IMR-90 (cell line): ENCODE measurements at regions of chr19 and their contacts with region 1.

Region 1: DNA sequence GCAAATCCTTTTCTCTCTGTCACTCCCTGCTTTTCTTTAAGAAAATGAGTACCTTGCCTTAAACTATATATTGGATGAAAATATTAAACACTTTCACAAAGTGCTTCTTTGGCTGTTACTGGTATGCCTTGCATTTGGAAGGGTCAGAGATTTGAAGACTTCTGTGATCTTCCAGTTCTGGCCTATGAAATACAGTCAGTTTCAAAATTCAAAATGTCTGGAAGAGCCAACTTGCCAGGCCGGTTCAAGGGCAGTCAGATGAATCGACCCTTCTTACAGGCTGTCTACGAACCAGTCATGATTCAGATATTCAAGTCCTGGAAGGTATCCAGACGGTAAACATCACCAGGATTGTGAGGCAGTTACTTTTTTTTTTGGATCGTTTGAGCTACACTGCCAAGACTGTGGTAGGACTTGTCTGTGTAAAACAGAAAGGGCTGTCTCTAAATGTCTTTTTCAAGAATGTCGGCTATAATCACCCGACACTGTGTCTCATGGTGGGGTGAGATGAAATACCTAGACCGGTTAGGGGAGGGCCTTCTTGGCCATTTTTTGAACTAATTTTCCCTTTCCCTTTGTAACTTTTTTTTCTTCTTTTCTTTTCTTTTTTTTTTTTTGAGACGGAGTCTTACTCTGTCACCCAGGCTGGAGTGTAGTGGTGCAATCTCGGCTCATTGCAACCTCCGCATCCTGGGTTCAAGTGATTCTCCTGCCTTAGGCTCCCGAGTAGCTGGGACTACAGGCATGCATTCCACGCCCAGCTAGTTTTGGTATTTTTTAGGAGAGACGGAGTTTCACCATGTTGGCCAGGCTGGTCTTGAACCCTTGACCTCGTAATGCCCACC is 11.2 kb downstream of the ACTN4 start:
- DNase-seq: peak; percentile 100
- ATAC-seq: peak; percentile 67
- H3K4me3 ChIP-seq: peak overlapping the region; percentile 17; the same call in 1 of the 2 replicates
- H3K27ac ChIP-seq: peak overlapping the region; percentile 97
- H3K4me1 ChIP-seq: peaks cover 44% of the 10 kb centered on the region
- H3K27me3 ChIP-seq: no peaks in the 10 kb centered on the region
- CTCF ChIP-seq: no peak
- POLR2A ChIP-seq: peak; percentile 74; the same call in 1 of the 2 replicates
- RAD21 ChIP-seq: peak; percentile 30; the same call in 1 of the 2 replicates

Region 2: GRCh38 chr19:38640368-38640767 is 18.3 kb before region 1 on chr19:
- CTCF ChIA-PET with region 1: no interaction called
- POLR2A ChIA-PET with region 1: no interaction called
- dilution Hi-C with region 1: no loop called
- in situ Hi-C with region 1: no loop called
- intact Hi-C with region 1: no loop called
- DNase-seq: peak; percentile 56
- ATAC-seq: peak; percentile 73
- H3K4me3 ChIP-seq: no peak overlapping the region
- H3K27ac ChIP-seq: no peak overlapping the region
- H3K4me1 ChIP-seq: no peaks in the 10 kb centered on the region
- H3K27me3 ChIP-seq: no peaks in the 10 kb centered on the region
- CTCF ChIP-seq: 0 out of 2 replicates have a peak, but pooled peaks have one; percentile 3
- POLR2A ChIP-seq: no peak
- RAD21 ChIP-seq: 0 out of 2 replicates have a peak, but pooled peaks have one; percentile 2

Region 3: DNA sequence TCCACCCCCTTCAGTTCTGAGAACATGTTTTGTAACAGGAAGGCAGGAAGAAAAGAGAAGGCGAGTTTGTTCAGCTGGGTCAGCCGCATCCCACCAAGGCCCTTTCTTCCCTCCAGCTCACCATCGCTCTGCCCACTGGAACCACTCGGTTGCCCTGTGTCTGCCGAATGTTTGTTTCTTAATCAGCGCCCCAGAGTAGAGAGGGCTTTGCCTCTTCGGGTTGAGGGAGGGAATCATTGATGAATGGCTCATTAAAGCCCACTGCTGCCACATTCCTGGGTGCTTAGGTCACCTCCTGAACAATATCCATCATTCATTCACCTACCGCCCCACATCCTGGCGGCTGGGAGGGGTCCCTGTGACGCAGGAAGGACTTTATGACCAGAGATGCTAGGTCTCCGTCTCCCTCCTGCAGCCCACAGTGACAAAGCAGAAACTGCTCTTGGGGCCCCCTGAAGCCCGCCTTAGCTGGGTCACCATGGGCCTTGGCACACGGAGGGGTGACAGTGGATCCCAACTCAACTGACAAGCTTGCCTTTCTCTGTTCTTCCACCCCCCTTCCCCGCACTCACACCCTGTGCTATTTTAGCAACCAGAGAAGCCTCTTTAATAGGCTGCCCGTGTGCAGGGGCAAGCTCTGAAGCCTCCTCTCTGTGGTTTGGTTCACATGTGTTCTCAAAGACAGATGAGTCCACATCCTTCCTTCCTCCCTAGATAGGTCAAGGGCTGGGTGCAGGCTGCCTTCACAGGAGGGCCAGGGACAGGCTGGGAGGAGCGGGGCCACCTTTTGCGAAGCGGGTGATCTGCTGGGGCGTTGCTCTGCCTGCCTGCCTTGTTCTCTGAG is 34.9 kb after region 1 on chr19:
- CTCF ChIA-PET with region 1: interaction called, 3 read pairs
- POLR2A ChIA-PET with region 1: interaction called, 17 read pairs
- dilution Hi-C with region 1: no loop called
- in situ Hi-C with region 1: no loop called
- intact Hi-C with region 1: loop called (anchors 5 kb)
- DNase-seq: peak; percentile 63
- ATAC-seq: peak; percentile 35
- H3K4me3 ChIP-seq: no peak overlapping the region
- H3K27ac ChIP-seq: peak overlapping the region; percentile 96
- H3K4me1 ChIP-seq: peaks cover 24% of the 10 kb centered on the region
- H3K27me3 ChIP-seq: no peaks in the 10 kb centered on the region
- CTCF ChIP-seq: no peak
- POLR2A ChIP-seq: no peak
- RAD21 ChIP-seq: no peak

Region 4: GRCh38 chr19:38722947-38723605 is 64.4 kb after region 1 on chr19:
- CTCF ChIA-PET with region 1: no interaction called
- POLR2A ChIA-PET with region 1: interaction called, 10 read pairs
- dilution Hi-C with region 1: no loop called
- in situ Hi-C with region 1: no loop called
- intact Hi-C with region 1: no loop called
- DNase-seq: no peak
- ATAC-seq: no peak
- H3K4me3 ChIP-seq: no peak overlapping the region
- H3K27ac ChIP-seq: no peak overlapping the region
- H3K4me1 ChIP-seq: peaks cover 8% of the 10 kb centered on the region; the same call in 1 of the 2 replicates
- H3K27me3 ChIP-seq: no peaks in the 10 kb centered on the region
- CTCF ChIP-seq: no peak
- POLR2A ChIP-seq: no peak
- RAD21 ChIP-seq: no peak

Region 5: GRCh38 chr19:38944981-38945506 is 286.4 kb after region 1 on chr19:
- CTCF ChIA-PET with region 1: no interaction called
- POLR2A ChIA-PET with region 1: no interaction called
- dilution Hi-C with region 1: no loop called
- in situ Hi-C with region 1: no loop called
- intact Hi-C with region 1: no loop called
- DNase-seq: no peak
- ATAC-seq: no peak
- H3K4me3 ChIP-seq: no peak overlapping the region
- H3K27ac ChIP-seq: no peak overlapping the region
- H3K4me1 ChIP-seq: no peaks in the 10 kb centered on the region; the same call in 1 of the 2 replicates
- H3K27me3 ChIP-seq: no peaks in the 10 kb centered on the region
- CTCF ChIP-seq: no peak
- POLR2A ChIP-seq: no peak
- RAD21 ChIP-seq: no peak